ENCODE measurements at regions of chr3 and their contacts with region 1.

Region 1: GRCh38 chr3:177359593-177360357 is 162.5 kb upstream of the TBL1XR1 start:
- DNase-seq: peak; percentile 96

Region 2: GRCh38 chr3:176789281-176789705 is 570.5 kb before region 1 on chr3:
- in situ Hi-C with region 1: no loop called
- DNase-seq: no peak

Region 3: GRCh38 chr3:177197041-177197727 is 162.6 kb before region 1 on chr3 and contains the start of gene TBL1XR1:
- in situ Hi-C with region 1: loop called (anchors 10 kb)
- DNase-seq: peak; percentile 94

Measured in KBM-7 (cell line).